ENCODE measurements at regions of chr1 and their contacts with region 1.

Region 1: DNA sequence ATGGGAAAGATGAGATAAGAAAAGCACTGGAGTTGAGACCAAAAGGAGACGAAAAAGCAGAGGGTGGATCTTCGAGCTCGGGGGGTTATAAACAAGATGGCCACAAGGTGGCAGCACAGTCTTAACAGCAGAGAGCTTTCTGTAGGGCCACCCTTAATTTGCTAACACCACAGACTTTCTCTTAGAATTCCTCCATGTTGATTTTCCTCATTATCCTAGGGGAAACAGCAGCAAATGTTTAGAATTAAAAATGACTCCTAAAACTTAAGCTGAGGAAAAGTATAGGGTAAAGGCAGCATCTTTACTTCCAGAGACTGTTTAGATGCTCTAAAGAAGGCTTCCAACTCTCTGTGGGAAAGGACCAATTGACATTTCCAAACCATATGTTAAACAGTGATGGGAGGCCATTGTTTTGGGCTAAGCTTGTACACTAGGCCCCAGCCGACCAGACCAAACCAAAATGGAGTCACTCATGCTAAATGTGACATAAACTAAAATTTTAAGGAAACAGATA is 2.5 kb upstream of the APOBEC4 start:
- DNase-seq: peak; percentile 77

Region 2: DNA sequence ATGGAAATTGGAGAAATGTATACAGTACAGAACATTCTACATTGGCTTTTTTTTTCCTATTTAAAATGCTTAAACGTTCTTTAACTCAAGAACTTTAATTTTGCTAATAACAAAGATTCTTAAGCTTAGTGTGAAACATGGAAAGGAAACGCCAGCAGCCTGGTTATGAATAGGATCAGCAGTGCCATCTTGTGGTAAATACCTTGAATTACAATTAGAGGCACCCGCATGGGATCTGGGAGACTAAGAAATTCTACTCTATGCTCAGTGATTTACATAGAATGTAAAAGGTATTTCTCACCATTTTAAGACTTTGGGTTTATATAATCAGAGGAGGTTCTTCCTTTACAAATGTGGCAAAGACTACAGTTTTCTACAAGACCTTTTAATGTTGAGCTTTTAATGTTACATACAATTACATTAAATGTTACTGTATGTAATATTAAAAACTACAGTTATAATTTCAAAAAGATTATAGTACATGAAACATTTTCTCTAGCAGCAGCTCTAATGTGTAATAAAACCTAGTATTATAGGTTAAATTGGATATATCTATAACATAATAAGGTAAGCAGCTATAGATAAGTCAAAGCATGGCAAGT is 29.6 kb after region 1 on chr1:
- intact Hi-C with region 1: loop called (anchors 5 kb)
- DNase-seq: no peak

Region 3: DNA sequence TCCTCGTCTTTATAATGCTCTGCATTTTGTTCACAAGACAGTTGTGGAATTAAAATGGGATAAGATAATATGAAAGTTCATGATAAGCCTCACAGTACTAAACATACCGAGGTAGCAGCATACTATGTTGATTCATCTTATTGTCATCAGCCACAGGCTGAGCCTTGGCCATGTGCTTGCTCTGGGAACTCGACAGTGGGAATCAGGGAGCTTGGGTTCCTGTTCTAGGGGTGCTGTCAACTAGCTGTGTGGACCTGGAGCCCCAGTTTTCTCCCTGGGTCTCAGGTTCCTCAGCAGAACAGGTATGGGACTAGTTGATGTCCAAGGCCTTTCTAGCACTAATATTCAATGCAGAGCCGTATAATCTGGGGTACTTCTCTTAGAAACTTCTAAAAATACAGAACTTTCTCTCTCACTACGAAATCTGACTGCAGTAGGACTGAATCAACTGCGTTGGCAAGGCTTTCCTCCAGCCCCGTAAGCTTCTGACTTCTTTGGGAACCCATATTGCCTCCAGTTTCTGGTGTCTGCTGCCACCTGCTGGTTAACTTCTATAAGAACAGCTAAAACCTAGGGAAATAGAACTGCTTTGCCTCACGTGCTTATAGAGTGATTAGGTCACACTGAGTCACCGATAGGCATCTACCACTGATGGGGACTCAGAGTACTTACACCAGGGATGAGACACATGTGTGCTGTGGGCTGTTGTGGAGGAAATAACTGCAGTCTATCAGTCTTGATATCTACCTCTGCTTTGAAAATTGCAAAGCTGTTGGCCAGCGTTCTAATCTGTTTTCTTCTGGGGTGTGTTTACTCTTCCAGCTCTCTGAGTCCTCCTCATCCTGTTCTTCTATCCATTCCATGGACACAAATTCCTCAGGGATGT is 260.2 kb after region 1 on chr1:
- intact Hi-C with region 1: loop called (anchors 1 kb)
- DNase-seq: no peak

Measured in cardiac septum (tissue), 1 donor.